Heart right ventricle (tissue), 16 donors: ENCODE measurements at regions of chr11 and their contacts with region 1.

Region 1: GRCh38 chr11:3217676-3218482 is 734 bp downstream of the MRGPRG start:
- DNase-seq: peak in 1 of 2 donors; percentile 9
- ATAC-seq: no peak
- H3K4me3 ChIP-seq: no peak overlapping the region
- H3K27ac ChIP-seq: no peak overlapping the region
- H3K4me1 ChIP-seq: peaks cover 0 to 10% (median 0%) of the 10 kb centered on the region in 9 donors
- H3K27me3 ChIP-seq: peaks cover 0 to 86% (median 42%) of the 10 kb centered on the region in 7 donors
- CTCF ChIP-seq: no peak

Region 2: GRCh38 chr11:3037040-3037944 is 180.6 kb before region 1 on chr11:
- intact Hi-C with region 1: loop called in 8 of 10 experiments (anchors 1 to 5 kb)
- DNase-seq: peak; percentile 80 to 83
- ATAC-seq: peak; percentile 68 to 90 (median 78)
- H3K4me3 ChIP-seq: no peak overlapping the region
- H3K27ac ChIP-seq: peak overlapping the region in 5 of 10 donors; percentile 10 to 56 (median 22)
- H3K4me1 ChIP-seq: peaks cover 5 to 33% (median 16%) of the 10 kb centered on the region in 9 donors
- H3K27me3 ChIP-seq: no peaks in the 10 kb centered on the region
- CTCF ChIP-seq: peak; percentile 72 to 93 (median 84)

Region 3: GRCh38 chr11:3086114-3086513 is 131.8 kb before region 1 on chr11:
- intact Hi-C with region 1: no loop called
- DNase-seq: no peak
- ATAC-seq: peak in 4 of 8 donors; percentile 10 to 16 (median 15)
- H3K4me3 ChIP-seq: no peak overlapping the region
- H3K27ac ChIP-seq: no peak overlapping the region
- H3K4me1 ChIP-seq: no peaks in the 10 kb centered on the region
- H3K27me3 ChIP-seq: peaks cover 0 to 6% (median 0%) of the 10 kb centered on the region in 7 donors
- CTCF ChIP-seq: no peak

Region 4: DNA sequence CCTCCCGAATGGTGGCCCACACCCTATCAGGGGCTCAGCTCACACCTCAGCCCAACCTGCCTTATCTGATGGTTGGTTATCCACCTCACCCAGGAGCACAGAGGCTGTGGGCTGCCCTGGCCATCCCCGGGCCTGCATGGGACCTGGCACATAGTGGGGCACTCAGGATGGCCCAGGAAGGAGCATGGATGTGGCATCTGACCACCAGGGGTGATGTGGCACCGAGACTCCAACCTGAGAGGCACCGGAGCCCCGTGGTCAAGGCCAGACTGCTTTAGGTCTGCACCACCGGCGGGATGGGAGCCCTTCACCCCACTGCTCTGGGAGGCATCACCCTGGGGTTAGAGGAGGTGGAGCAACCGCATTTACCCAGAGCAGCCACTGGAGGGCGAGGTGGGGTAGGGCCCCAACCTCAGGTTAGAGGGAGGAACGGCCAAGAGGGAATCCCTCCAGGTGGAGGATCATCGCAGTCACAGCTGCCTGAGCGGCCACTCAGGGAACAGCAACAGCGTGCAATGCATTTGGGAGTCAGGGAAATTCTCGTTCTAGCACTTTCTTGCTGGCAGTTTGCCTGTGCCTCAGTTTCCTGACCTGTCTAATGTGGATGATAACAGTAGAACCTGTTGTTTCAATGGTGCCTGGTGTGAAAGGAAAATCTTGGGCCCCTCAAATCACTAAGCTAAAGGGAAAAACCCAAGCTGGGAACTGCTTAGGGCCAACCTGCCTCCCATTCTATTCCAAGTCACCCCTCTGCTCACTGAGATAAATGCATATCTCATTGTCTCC is 107.8 kb before region 1 on chr11:
- intact Hi-C with region 1: loop called in 7 of 10 experiments (anchors 2 to 5 kb)
- DNase-seq: peak in 1 of 2 donors; percentile 45
- ATAC-seq: peak; percentile 8 to 75 (median 73)
- H3K4me3 ChIP-seq: no peak overlapping the region
- H3K27ac ChIP-seq: no peak overlapping the region
- H3K4me1 ChIP-seq: peaks cover 0 to 19% (median 0%) of the 10 kb centered on the region in 9 donors
- H3K27me3 ChIP-seq: no peaks in the 10 kb centered on the region
- CTCF ChIP-seq: peak; percentile 47 to 76 (median 68)

Region 5: GRCh38 chr11:3123761-3124733 is 93.8 kb before region 1 on chr11:
- intact Hi-C with region 1: loop called in 1 of 10 experiments (anchors 5 kb)
- DNase-seq: peak; percentile 63 to 74
- ATAC-seq: peak; percentile 32 to 81 (median 51)
- H3K4me3 ChIP-seq: no peak overlapping the region
- H3K27ac ChIP-seq: peak overlapping the region in 9 of 10 donors; percentile 4 to 69 (median 46)
- H3K4me1 ChIP-seq: peaks cover 14 to 53% (median 48%) of the 10 kb centered on the region in 9 donors
- H3K27me3 ChIP-seq: no peaks in the 10 kb centered on the region
- CTCF ChIP-seq: no peak

Region 6: GRCh38 chr11:3160252-3161031 is 57.4 kb before region 1 on chr11:
- intact Hi-C with region 1: loop called in 1 of 10 experiments (anchors 5 kb)
- DNase-seq: peak; percentile 87 to 91
- ATAC-seq: peak; percentile 75 to 88 (median 84)
- H3K4me3 ChIP-seq: peak overlapping the region; percentile 26 to 67 (median 58)
- H3K27ac ChIP-seq: peak overlapping the region in 9 of 10 donors; percentile 54 to 84 (median 74)
- H3K4me1 ChIP-seq: peaks cover 22 to 91% (median 79%) of the 10 kb centered on the region in 9 donors
- H3K27me3 ChIP-seq: no peaks in the 10 kb centered on the region
- CTCF ChIP-seq: no peak